ENCODE measurements at regions of chr16 and their contacts with region 1.

Region 1: GRCh38 chr16:83137326-83137770 is 510.6 kb downstream of the CDH13 start:
- DNase-seq: peak; percentile 18
- H3K4me3 Mint-ChIP-seq: peak overlapping the region; percentile 49
- H3K27ac Mint-ChIP-seq: no peak overlapping the region
- H3K4me1 Mint-ChIP-seq: peaks cover 2% of the 10 kb centered on the region
- H3K27me3 Mint-ChIP-seq: no peaks in the 10 kb centered on the region

Region 2: GRCh38 chr16:82715833-82716232 is 421.5 kb before region 1 on chr16:
- intact Hi-C with region 1: loop called (anchors 5 kb)
- DNase-seq: no peak
- H3K4me3 Mint-ChIP-seq: no peak overlapping the region
- H3K27ac Mint-ChIP-seq: no peak overlapping the region
- H3K4me1 Mint-ChIP-seq: no peaks in the 10 kb centered on the region
- H3K27me3 Mint-ChIP-seq: peaks cover 7% of the 10 kb centered on the region

Measured in activated T-helper 2 cell treated with anti-CD3 and anti-CD28 coated beads, Interferon-gamma antibody, Interleukin-2, Interleukin-4, amounts not matched to agents 10 μg/mL and 5 μg/mL and 100 μg/mL, durations not matched to agents 14 hours and 24 hours and 36 hours (primary cell).